Endothelial cell of umbilical vein (primary cell): ENCODE measurements at regions of chr17 and their contacts with region 1.

Region 1: GRCh38 chr17:35373534-35373983 is at the start of gene SLFN11:
- DNase-seq: peak; percentile 92
- H3K4me3 ChIP-seq: peak within 1 kb of the TSS; percentile 88 to 96 (median 90)
- H3K27ac ChIP-seq: peak within 1 kb of the TSS; percentile 98
- H3K4me1 ChIP-seq: peaks cover 21% of the 10 kb centered on the region
- H3K27me3 ChIP-seq: no peaks in the 10 kb centered on the region
- CTCF ChIP-seq: no peak
- POLR2A ChIP-seq: peak; percentile 97
- total RNA-seq, gene SLFN11: 95.0 and 110 TPM in 2 replicates

Region 2: DNA sequence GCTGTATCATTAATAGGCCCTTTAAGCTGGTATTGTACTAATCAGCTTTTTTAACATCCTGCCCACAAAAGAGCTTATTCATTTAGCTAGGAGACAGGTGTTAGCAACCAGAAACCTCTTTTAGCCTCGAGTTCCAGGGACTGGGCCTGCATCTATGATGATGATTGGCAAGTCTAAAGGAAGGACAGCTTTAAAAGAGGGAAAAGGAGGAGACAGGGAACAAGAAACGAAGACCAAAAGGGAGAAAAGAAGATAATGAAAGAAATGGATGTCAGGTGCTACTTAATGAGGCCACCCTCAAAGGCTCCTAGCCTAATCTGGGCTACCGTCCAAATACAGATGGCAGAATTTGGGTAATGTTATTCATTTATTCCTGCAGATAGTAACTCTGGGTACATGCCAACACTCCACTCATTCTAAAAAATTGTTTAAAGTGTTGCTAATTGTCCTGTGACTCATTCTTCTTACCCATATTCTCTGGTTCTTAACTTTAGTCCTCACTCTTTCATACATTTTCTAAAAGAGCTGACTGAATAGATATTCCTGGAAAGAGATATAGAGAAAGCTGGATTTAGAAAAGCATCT is 291.4 kb before region 1 on chr17:
- CTCF ChIA-PET with region 1: no interaction called
- POLR2A ChIA-PET with region 1: no interaction called
- dilution Hi-C with region 1: no loop called
- intact Hi-C with region 1: no loop called
- DNase-seq: peak; percentile 71
- H3K4me3 ChIP-seq: no peak overlapping the region
- H3K27ac ChIP-seq: peak overlapping the region; percentile 31
- H3K4me1 ChIP-seq: peaks cover 22% of the 10 kb centered on the region
- H3K27me3 ChIP-seq: no peaks in the 10 kb centered on the region
- CTCF ChIP-seq: no peak
- POLR2A ChIP-seq: no peak

Region 3: DNA sequence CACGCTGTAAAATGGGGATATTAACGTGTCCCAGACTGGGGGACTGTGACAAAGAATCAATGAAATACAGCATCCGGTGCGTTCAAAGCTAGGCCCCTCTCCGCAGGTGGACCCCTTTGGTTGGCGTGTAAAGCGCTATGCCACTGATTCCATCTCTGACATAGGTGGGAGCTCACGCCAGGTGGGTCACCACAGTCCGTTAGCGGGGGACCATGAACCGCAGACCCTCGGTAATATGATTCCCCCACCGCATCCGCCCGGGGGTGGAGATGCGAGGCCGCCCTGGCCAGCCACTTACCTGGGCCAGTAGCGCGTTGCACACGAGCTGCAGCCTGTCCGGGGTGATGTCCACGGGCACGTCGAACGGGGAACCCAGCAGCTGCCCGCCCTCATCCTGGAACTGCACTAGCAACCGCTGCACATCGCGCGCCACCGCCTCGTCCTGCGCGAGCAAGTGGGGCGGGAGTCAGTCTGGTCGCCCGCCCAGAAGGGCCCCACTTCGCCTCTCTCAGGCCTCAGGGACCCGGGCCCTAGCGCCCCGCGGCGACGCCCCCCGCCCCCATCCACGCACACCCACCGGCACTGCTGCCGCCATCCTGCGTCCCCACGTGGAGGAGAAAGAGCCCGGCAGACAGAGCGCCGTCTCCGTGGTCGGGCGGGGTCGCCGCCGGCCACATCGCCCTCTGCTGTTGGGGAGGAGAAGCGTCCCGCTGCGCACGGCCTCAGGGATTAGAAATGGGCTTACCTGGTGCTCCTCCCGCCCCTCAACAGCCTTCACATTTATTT is 231.7 kb before region 1 on chr17 and contains the start of gene NLE1:
- CTCF ChIA-PET with region 1: no interaction called
- POLR2A ChIA-PET with region 1: no interaction called
- dilution Hi-C with region 1: no loop called
- intact Hi-C with region 1: loop called (anchors 2 kb)
- DNase-seq: peak; percentile 80
- H3K4me3 ChIP-seq: peak within 1 kb of the TSS; percentile 77 to 91 (median 79)
- H3K27ac ChIP-seq: no peak within 1 kb of the TSS
- H3K4me1 ChIP-seq: peaks cover 6% of the 10 kb centered on the region
- H3K27me3 ChIP-seq: peaks cover 0 to 2% of the 10 kb centered on the region in 2 experiments
- CTCF ChIP-seq: peak; percentile 95 to 96
- POLR2A ChIP-seq: peak; percentile 73
- total RNA-seq, gene NLE1: 15.8 and 22.8 TPM in 2 replicates

Region 4: DNA sequence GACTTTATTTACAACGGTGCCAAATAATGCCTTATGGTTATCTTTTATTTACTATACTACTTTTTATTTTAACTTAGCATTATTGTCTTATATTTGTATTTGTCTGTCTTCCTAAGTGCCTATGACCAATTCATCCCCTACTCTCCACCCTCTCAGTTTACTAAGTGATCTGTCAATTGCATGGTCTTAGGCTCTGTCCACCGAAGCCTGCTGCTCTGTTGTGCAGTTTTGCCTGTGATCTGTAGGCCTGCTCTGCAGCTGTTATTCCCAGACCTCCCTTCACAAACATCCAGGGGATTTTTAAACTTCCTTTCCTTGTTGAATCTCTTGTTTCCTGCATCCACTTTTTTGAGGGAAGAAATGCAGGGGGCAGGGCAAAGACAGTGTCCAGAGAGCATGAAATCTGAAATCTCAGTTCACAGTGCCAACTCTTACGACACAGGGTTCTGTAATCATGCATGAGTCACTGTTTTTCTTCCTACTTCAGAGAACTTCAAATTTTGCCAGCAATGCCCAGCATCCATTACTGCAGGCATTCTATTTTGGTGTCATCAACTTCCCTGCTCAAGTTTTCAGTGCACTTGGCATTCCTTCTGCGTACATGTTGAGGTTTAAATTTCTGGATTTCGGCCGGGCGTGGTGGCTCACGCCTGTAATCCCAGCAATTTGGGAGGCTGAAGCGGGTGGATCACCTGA is 119.3 kb before region 1 on chr17:
- CTCF ChIA-PET with region 1: no interaction called
- POLR2A ChIA-PET with region 1: interaction called, 3 read pairs
- dilution Hi-C with region 1: no loop called
- intact Hi-C with region 1: loop called (anchors 2 kb)
- DNase-seq: peak; percentile 98
- H3K4me3 ChIP-seq: no peak overlapping the region
- H3K27ac ChIP-seq: peak overlapping the region; percentile 59
- H3K4me1 ChIP-seq: peaks cover 35% of the 10 kb centered on the region
- H3K27me3 ChIP-seq: no peaks in the 10 kb centered on the region
- CTCF ChIP-seq: no peak
- POLR2A ChIP-seq: no peak

Region 5: GRCh38 chr17:35312790-35313711 is 60.5 kb before region 1 on chr17:
- CTCF ChIA-PET with region 1: interaction called, 4 read pairs
- POLR2A ChIA-PET with region 1: no interaction called
- dilution Hi-C with region 1: no loop called
- intact Hi-C with region 1: loop called (anchors 2 kb)
- DNase-seq: peak; percentile 71
- H3K4me3 ChIP-seq: no peak overlapping the region
- H3K27ac ChIP-seq: no peak overlapping the region
- H3K4me1 ChIP-seq: peaks cover 3% of the 10 kb centered on the region
- H3K27me3 ChIP-seq: no peaks in the 10 kb centered on the region
- CTCF ChIP-seq: peak; percentile 67
- POLR2A ChIP-seq: no peak

Region 6: DNA sequence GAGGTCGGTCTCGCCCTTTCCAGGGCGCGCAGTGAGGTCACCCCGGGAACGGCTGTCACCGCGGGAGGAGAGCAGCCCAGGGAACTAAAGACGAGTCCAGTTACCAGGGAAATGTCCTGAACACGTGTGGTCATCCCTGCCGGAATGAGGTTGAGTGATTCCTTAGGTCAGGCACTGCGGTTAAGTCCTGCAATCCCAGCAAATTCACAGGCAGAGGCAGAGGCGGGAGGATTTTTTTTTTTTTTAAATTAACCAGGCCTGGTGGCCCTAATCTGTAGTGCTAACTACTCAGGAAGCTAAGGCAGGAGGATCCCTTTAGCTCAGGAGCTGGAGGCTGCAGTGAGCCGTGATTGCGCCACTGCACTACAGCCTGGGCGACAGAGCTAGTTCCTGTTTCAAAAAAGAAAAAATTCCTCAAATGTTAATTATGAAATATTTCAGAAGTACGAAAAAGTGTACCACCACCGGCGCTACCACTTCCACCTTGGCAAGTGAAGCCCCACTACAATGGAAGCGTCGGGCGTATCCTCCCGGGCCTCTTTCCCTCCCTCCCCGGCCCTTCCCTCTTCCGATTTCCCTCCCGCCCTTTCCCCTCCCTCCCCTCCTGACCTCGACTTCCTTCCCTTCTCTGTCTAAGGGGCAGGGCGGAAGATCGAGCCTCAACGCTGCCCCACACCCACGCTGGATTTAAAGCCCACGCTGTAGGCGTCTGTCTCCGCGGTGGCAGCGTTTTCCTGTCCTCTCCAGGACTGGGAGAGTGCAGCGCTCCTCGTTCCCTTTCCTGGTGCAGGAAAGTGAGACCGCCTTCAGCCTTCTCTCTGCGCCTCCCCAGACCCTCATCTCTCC is 27.4 kb before region 1 on chr17:
- CTCF ChIA-PET with region 1: no interaction called
- POLR2A ChIA-PET with region 1: no interaction called
- dilution Hi-C with region 1: no loop called
- intact Hi-C with region 1: loop called (anchors 1 kb)
- DNase-seq: peak; percentile 45
- H3K4me3 ChIP-seq: peak overlapping the region in 2 of 3 experiments; percentile 13 to 46
- H3K27ac ChIP-seq: no peak overlapping the region
- H3K4me1 ChIP-seq: peaks cover 10% of the 10 kb centered on the region
- H3K27me3 ChIP-seq: peaks cover 3 to 8% of the 10 kb centered on the region in 2 experiments
- CTCF ChIP-seq: no peak
- POLR2A ChIP-seq: no peak

Region 7: DNA sequence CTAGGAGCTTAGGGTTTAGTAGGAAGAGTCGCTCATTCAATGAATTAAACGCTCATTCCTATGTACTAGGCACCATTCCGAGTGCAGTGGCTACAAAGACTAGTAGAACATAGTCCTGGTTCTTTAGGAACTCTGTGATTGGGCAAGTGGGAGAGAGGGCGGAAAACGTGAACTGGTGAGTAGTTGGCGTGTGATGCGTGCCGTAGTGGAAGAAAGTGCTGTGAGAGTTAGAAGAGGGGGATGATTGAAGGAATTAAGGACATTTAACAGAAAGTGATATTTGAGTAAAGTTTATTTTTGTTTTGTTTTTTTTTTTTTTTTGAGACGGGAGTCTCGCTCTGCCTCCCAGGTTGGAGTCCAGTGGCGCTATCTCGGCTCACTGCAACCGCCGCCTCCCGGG is 195.0 kb after region 1 on chr17:
- CTCF ChIA-PET with region 1: no interaction called
- POLR2A ChIA-PET with region 1: no interaction called
- dilution Hi-C with region 1: no loop called
- intact Hi-C with region 1: no loop called
- DNase-seq: peak; percentile 54
- H3K4me3 ChIP-seq: peak overlapping the region; percentile 72 to 94 (median 72)
- H3K27ac ChIP-seq: peak overlapping the region; percentile 83
- H3K4me1 ChIP-seq: peaks cover 10% of the 10 kb centered on the region
- H3K27me3 ChIP-seq: peaks cover 7 to 12% of the 10 kb centered on the region in 2 experiments
- CTCF ChIP-seq: no peak
- POLR2A ChIP-seq: no peak

Region 8: DNA sequence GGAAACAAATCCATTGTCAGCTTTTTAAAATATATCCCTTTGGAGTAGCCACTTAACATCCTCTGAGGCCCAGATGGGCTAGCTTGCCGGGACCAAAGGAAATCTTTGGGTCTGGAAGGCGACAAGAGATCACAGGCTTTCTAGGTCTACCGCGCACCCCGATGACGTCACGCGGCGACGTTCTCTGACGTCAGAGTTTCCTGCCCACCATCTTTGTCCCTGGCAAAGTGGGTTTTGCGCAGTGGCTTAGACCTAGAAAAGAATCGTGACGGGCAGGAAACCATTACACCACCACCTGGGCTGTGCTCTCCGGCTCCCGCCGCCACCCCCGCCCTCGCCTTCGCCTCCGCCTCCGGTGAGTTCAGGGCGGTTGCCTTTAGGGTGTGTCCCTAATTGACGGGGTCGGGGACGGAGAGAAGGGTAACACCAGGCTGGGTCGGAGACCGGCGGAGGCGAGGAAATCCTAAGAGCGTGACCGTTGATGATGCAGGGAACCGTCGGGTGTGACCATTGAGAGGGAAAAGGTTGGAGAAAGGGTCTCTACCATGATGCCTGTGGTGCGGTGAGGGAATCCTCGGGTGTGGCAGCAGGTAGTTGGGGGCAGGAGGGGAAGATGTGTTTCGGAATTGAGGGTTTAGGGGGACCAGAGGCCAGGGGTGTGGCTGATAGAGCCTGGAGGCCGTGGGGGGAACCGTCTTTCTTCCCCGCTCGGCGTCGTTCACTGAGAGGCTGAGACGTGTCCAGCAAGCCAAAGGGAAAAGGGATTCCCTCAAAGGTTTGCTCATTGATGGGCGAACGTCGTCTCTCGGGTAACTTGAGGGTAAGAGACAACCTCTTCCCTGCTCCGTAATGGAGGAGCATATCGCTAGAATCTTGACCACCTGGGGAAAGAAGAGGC is 213.8 kb after region 1 on chr17 and contains the start of gene AP2B1:
- CTCF ChIA-PET with region 1: no interaction called
- POLR2A ChIA-PET with region 1: no interaction called
- dilution Hi-C with region 1: no loop called
- intact Hi-C with region 1: loop called (anchors 5 kb)
- DNase-seq: peak; percentile 99
- H3K4me3 ChIP-seq: peak within 1 kb of the TSS; percentile 54 to 84 (median 70)
- H3K27ac ChIP-seq: peak within 1 kb of the TSS; percentile 91
- H3K4me1 ChIP-seq: peaks cover 19% of the 10 kb centered on the region
- H3K27me3 ChIP-seq: peaks cover 4 to 6% of the 10 kb centered on the region in 2 experiments
- CTCF ChIP-seq: no peak
- POLR2A ChIP-seq: peak; percentile 81
- total RNA-seq, gene AP2B1: 198 and 200 TPM in 2 replicates

Region 9: GRCh38 chr17:35808962-35809854 is 435.6 kb after region 1 on chr17 and contains the start of gene TAF15:
- CTCF ChIA-PET with region 1: no interaction called
- POLR2A ChIA-PET with region 1: no interaction called
- dilution Hi-C with region 1: no loop called
- intact Hi-C with region 1: loop called (anchors 10 kb)
- DNase-seq: peak; percentile 98
- H3K4me3 ChIP-seq: peak within 1 kb of the TSS; percentile 56 to 96 (median 81)
- H3K27ac ChIP-seq: peak within 1 kb of the TSS; percentile 90
- H3K4me1 ChIP-seq: peaks cover 35% of the 10 kb centered on the region
- H3K27me3 ChIP-seq: no peaks in the 10 kb centered on the region
- CTCF ChIP-seq: peak; percentile 77 to 85
- POLR2A ChIP-seq: peak; percentile 98
- total RNA-seq, gene TAF15: 244 and 247 TPM in 2 replicates